Gastrocnemius medialis (tissue), 4 donors: ENCODE measurements at regions of chr9 and their contacts with region 1.

Region 1: GRCh38 chr9:134325817-134326723 is at the start of gene RXRA:
- DNase-seq: peak; percentile 77 to 87
- ATAC-seq: peak; percentile 27 to 43
- H3K4me3 ChIP-seq: peak within 1 kb of the TSS; percentile 79 to 95 (median 88)
- H3K27ac ChIP-seq: peak within 1 kb of the TSS; percentile 94 to 100 (median 97)
- H3K4me1 ChIP-seq: peaks cover 40 to 46% of the 10 kb centered on the region in 2 donors
- H3K27me3 ChIP-seq: no peaks in the 10 kb centered on the region
- CTCF ChIP-seq: peak in 1 of 5 experiments; percentile 25
- POLR2A ChIP-seq: peak; percentile 93 to 96
- total RNA-seq, gene RXRA: 70.8 to 224 (median 160) TPM

Region 2: GRCh38 chr9:134163353-134164196 is 162.5 kb before region 1 on chr9:
- in situ Hi-C with region 1: loop called in 1 of 4 experiments (anchors 10 kb)
- intact Hi-C with region 1: no loop called
- DNase-seq: peak; percentile 45 to 60
- ATAC-seq: peak in 1 of 2 donors; percentile 31
- H3K4me3 ChIP-seq: no peak overlapping the region
- H3K27ac ChIP-seq: no peak overlapping the region
- H3K4me1 ChIP-seq: peaks cover 4 to 10% of the 10 kb centered on the region in 2 donors
- H3K27me3 ChIP-seq: no peaks in the 10 kb centered on the region
- CTCF ChIP-seq: peak; percentile 39 to 63 (median 60)
- POLR2A ChIP-seq: no peak

Region 3: GRCh38 chr9:134205672-134206310 is 120.3 kb before region 1 on chr9:
- in situ Hi-C with region 1: no loop called
- intact Hi-C with region 1: loop called (anchors 10 kb)
- DNase-seq: peak; percentile 15 to 37
- ATAC-seq: no peak
- H3K4me3 ChIP-seq: no peak overlapping the region
- H3K27ac ChIP-seq: peak overlapping the region in 3 of 4 donors; percentile 1 to 25 (median 15)
- H3K4me1 ChIP-seq: peaks cover 30 to 34% of the 10 kb centered on the region in 2 donors
- H3K27me3 ChIP-seq: no peaks in the 10 kb centered on the region
- CTCF ChIP-seq: no peak
- POLR2A ChIP-seq: no peak

Region 4: GRCh38 chr9:134291452-134291881 is 34.6 kb before region 1 on chr9:
- in situ Hi-C with region 1: no loop called
- intact Hi-C with region 1: loop called (anchors 2 kb)
- DNase-seq: peak; percentile 52 to 70
- ATAC-seq: peak; percentile 59 to 89
- H3K4me3 ChIP-seq: no peak overlapping the region
- H3K27ac ChIP-seq: peak overlapping the region in 3 of 4 donors; percentile 24 to 64 (median 33)
- H3K4me1 ChIP-seq: peaks cover 16 to 27% of the 10 kb centered on the region in 2 donors
- H3K27me3 ChIP-seq: no peaks in the 10 kb centered on the region
- CTCF ChIP-seq: no peak
- POLR2A ChIP-seq: no peak

Region 5: GRCh38 chr9:134301387-134302129 is 24.5 kb before region 1 on chr9:
- in situ Hi-C with region 1: no loop called
- intact Hi-C with region 1: no loop called
- DNase-seq: no peak
- ATAC-seq: no peak
- H3K4me3 ChIP-seq: no peak overlapping the region
- H3K27ac ChIP-seq: no peak overlapping the region
- H3K4me1 ChIP-seq: no peaks in the 10 kb centered on the region
- H3K27me3 ChIP-seq: no peaks in the 10 kb centered on the region
- CTCF ChIP-seq: no peak
- POLR2A ChIP-seq: no peak

Region 6: GRCh38 chr9:134419684-134420076 is 93.6 kb after region 1 on chr9:
- in situ Hi-C with region 1: no loop called
- intact Hi-C with region 1: loop called (anchors 5 kb)
- DNase-seq: peak in 1 of 2 donors; percentile 74
- ATAC-seq: peak in 1 of 2 donors; percentile 23
- H3K4me3 ChIP-seq: no peak overlapping the region
- H3K27ac ChIP-seq: peak overlapping the region; percentile 90 to 98 (median 98)
- H3K4me1 ChIP-seq: peaks cover 64 to 87% of the 10 kb centered on the region in 2 donors
- H3K27me3 ChIP-seq: no peaks in the 10 kb centered on the region
- CTCF ChIP-seq: peak; percentile 43 to 76 (median 56)
- POLR2A ChIP-seq: no peak